Left colon (tissue), 2 donors: ENCODE measurements at regions of chr17 and their contacts with region 1.

Region 1: GRCh38 chr17:61389670-61390478 is 9.8 kb upstream of the TBX2 start:
- DNase-seq: no peak
- ATAC-seq: peak; percentile 62

Region 2: GRCh38 chr17:61002316-61002736 is 387.5 kb before region 1 on chr17:
- intact Hi-C with region 1: loop called in 1 of 2 experiments (anchors 5 kb)
- DNase-seq: no peak
- ATAC-seq: peak; percentile 60